Aorta (tissue), 5 donors: ENCODE measurements at regions of chr10 and their contacts with region 1.

Region 1: DNA sequence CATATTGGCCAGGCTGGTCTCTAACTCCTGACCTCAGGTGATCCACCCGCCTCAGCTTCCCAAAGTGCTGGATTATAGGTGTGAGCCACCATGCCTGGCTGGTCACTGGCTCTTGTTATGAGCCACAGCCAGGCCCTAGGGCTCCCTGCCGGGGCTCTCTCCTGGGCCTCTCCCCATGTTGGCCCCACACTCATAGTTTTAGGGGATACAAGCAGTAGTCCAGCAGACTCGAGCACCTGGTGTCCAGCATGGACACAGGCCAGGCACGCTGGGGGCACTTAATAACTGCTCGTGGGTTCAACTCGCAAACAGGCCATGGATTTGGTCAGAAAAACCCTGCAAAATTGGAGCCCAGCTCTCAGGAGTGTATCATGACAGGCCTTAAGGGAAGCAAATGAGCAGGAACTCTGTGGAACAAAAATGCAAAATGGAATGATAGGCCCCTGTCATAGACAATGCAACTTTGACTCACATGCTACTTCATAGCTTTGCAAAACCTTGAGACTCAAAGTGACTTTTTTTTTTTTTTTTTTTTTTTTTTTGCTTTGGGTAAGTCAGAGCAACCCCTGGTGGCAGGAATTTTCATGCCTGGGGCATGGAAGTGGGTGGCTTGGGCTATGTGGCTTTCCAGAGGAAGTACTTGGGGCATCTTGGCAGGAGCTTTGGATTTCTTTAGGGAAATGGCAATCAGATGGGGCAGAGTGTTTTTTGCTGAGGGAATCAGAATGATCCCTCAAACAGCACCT is 62.5 kb downstream of the TACC2 start:
- DNase-seq: peak; percentile 72 to 83
- ATAC-seq: peak; percentile 58
- H3K4me3 ChIP-seq: no peak overlapping the region
- H3K27ac ChIP-seq: peak overlapping the region in 1 of 2 donors; percentile 58
- H3K4me1 ChIP-seq: peaks cover 0 to 1% of the 10 kb centered on the region in 2 donors
- H3K27me3 ChIP-seq: no peaks in the 10 kb centered on the region

Region 2: DNA sequence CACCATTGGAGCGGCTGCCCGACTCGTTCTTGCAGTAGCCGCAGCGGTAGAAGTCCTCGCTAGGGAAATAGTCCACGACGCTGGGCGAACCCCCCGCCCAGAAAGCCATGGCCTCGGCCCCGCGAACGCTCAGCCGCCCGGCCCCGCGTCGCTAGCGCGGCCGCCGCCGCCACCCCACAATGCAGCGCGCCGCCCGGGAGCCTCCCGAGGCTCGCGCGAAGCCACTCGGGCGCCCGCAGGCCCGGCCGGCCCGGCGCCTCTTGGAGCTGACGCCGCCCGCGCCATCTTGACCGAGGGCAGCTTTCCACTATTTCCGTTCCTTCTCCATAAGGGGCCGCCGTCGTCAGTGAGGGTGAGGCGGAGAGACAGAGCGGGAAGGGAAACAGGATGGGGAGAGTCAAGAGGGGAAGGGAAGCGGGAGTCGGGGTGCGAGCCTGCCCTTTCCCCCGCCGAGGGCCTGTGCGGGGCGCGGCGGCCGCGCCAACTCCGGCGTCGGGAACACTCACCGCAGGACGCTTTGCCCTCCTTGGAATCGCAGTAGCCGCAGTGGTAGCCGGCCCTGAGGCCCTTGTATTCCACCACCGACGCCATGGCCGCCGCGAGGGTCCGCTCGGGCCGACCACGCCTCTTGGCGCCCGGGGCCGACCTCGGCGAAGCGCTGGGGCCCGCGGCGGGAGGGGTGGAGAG is 123.4 kb before region 1 on chr10 and contains the start of gene ATE1:
- intact Hi-C with region 1: loop called in 1 of 2 experiments (anchors 5 kb)
- DNase-seq: peak; percentile 92 to 96
- ATAC-seq: peak; percentile 97
- H3K4me3 ChIP-seq: peak within 1 kb of the TSS; percentile 80 to 90
- H3K27ac ChIP-seq: peak within 1 kb of the TSS; percentile 76 to 80
- H3K4me1 ChIP-seq: no peaks in the 10 kb centered on the region
- H3K27me3 ChIP-seq: no peaks in the 10 kb centered on the region
- total RNA-seq, gene ATE1: 26.6 to 30.0 TPM

Region 3: DNA sequence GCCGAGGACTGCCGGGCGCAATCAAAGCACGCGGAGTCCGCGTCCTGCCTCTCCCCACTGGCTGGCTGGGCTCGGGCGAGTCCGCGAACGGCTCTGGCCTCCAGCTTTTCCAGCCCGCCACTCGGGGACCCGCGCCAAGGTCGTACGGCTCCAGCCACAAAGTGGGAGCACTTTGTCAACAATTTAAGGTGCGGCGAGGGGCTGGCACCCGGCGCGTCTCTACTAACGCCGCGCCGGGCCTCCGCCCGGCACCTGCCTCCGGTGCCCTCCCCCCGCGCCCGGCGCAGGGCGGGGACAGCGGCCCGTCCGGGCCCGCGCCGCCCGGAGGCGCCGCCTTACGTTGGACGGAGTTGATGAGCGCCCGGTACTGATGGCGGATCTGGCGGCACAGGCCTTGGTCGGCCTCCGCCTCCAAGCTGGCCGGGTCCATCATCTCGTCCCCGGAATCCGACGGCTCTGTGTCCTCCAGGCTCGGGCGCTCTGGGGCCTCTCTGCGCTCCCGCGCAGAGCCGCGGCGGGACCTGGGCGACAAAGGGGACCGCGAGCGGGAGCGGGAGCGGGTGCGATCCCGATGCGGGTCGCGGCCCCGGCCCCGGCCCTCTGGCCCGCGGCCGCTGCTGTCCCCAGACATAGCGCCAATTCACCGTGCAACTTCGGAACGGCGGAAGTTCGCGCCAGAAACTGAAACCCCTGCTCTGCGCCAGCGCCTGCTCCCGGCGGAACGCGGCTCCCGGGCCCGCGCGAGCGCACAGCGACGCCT is 76.7 kb before region 1 on chr10 and contains the start of gene NSMCE4A:
- intact Hi-C with region 1: loop called in 1 of 2 experiments (anchors 2 kb)
- DNase-seq: peak; percentile 87 to 94
- ATAC-seq: peak; percentile 94
- H3K4me3 ChIP-seq: peak within 1 kb of the TSS; percentile 69 to 80
- H3K27ac ChIP-seq: peak within 1 kb of the TSS; percentile 46 to 78
- H3K4me1 ChIP-seq: no peaks in the 10 kb centered on the region
- H3K27me3 ChIP-seq: no peaks in the 10 kb centered on the region
- total RNA-seq, gene NSMCE4A: 36.7 to 50.3 TPM

Region 4: GRCh38 chr10:122010405-122011050 is 40.9 kb before region 1 on chr10:
- intact Hi-C with region 1: no loop called
- DNase-seq: no peak
- ATAC-seq: no peak
- H3K4me3 ChIP-seq: no peak overlapping the region
- H3K27ac ChIP-seq: no peak overlapping the region
- H3K4me1 ChIP-seq: no peaks in the 10 kb centered on the region
- H3K27me3 ChIP-seq: no peaks in the 10 kb centered on the region

Region 5: GRCh38 chr10:122098924-122099323 is 47.5 kb after region 1 on chr10:
- intact Hi-C with region 1: loop called (anchors 5 kb)
- DNase-seq: peak in 1 of 2 donors; percentile 60
- ATAC-seq: peak; percentile 80
- H3K4me3 ChIP-seq: no peak overlapping the region
- H3K27ac ChIP-seq: peak overlapping the region in 1 of 2 donors; percentile 19
- H3K4me1 ChIP-seq: peaks cover 0 to 4% of the 10 kb centered on the region in 2 donors
- H3K27me3 ChIP-seq: no peaks in the 10 kb centered on the region

Region 6: DNA sequence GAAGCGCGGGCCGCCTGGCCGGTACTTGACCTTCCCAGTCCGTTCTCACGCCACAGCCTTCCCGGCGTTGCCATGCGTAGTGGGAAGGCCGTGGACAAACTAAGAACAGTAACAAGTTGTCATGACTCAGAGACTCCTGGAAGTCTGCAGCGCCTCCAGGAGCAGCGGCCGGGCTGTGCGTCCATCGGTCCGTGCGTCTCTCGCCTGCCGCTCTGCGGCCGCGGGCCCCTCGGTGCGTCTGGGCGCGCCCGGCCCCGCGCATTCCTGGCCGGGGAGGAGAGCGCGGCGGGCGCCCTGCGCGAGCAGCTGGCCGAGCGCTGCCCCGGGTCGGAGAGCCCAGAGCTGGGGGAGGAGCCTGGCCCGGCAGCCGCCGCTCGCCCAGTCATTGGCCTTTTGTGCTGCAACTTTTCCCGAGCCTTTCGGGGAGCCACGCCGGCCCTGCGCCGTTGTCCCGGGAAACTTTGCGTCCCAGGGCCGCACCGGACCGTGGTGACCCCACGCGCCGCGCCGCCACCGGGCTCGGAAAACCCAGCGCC is 61.3 kb after region 1 on chr10:
- intact Hi-C with region 1: loop called (anchors 2 to 5 kb)
- DNase-seq: peak; percentile 92 to 95
- ATAC-seq: peak; percentile 92
- H3K4me3 ChIP-seq: peak overlapping the region; percentile 39 to 57
- H3K27ac ChIP-seq: peak overlapping the region; percentile 83 to 99
- H3K4me1 ChIP-seq: no peaks in the 10 kb centered on the region
- H3K27me3 ChIP-seq: no peaks in the 10 kb centered on the region

Region 7: DNA sequence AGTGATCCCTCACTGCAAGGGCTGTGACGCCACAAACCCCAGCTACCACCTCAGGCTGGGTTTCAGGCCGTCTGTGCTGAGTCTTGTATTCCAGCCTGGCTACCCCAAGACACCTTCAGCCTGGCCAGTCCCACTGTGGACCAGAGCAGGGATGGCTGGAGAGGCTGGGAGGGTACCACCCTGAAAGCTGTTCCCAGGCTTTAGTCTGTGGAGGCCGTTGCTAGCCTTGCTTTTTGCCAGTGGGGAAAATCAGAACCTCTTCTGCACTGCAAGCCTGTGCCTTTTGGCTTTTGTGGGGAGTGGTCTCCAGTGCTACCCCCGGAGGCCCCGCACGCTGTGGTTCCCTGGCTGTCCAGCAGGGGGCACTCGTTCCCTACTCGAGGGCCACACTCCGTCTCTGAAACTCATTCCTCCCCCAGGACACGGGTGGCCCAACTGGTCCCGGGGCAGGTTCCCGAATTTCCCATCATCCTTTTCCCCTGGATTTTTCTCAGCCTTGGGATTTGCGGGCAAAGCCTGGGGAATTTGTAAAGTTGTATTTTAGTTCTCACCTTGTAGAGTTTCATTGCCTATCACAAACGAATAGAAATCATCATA is 91.3 kb after region 1 on chr10:
- intact Hi-C with region 1: loop called in 1 of 2 experiments (anchors 5 kb)
- DNase-seq: peak in 1 of 2 donors; percentile 89
- ATAC-seq: peak; percentile 56
- H3K4me3 ChIP-seq: no peak overlapping the region
- H3K27ac ChIP-seq: peak overlapping the region in 1 of 2 donors; percentile 65
- H3K4me1 ChIP-seq: peaks cover 0 to 5% of the 10 kb centered on the region in 2 donors
- H3K27me3 ChIP-seq: no peaks in the 10 kb centered on the region

Region 8: DNA sequence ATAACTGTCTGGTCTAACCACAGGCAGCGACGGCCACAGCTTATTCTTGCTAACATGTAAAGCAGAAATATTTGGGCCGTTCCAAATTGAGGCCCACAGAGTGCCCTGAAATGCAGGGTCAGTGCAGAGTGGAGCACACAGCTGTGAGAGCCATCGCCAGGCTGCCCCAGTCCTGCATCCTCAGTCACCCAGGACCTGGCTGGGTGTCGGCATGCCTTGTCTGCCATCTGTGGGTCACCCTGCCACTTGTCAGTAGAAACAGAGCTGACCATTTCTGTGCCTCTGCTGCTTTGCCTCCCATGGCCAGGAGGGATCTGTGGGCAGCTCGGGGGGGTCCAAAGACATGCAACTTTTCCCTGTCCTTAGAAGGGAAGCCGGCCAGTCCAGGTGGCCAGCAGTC is 162.3 kb after region 1 on chr10:
- intact Hi-C with region 1: loop called (anchors 10 kb)
- DNase-seq: peak in 1 of 2 donors; percentile 72
- ATAC-seq: no peak
- H3K4me3 ChIP-seq: no peak overlapping the region
- H3K27ac ChIP-seq: no peak overlapping the region
- H3K4me1 ChIP-seq: no peaks in the 10 kb centered on the region
- H3K27me3 ChIP-seq: no peaks in the 10 kb centered on the region